ENCODE measurements at regions of chr5 and their contacts with region 1.

Region 1: GRCh38 chr5:33936004-33936380 is 194 bp upstream of the RXFP3 start:
- DNase-seq: peak; percentile 72 to 88
- ATAC-seq: peak; percentile 87
- H3K4me3 ChIP-seq: peak overlapping the region in 1 of 2 donors; percentile 14
- H3K27ac ChIP-seq: no peak overlapping the region
- H3K4me1 ChIP-seq: no peaks in the 10 kb centered on the region
- H3K27me3 ChIP-seq: no peaks in the 10 kb centered on the region

Region 2: GRCh38 chr5:33439905-33440481 is 496.0 kb before region 1 on chr5:
- intact Hi-C with region 1: loop called in 1 of 2 experiments (anchors 10 kb)
- DNase-seq: no peak
- ATAC-seq: no peak
- H3K4me3 ChIP-seq: peak overlapping the region; percentile 75 to 95
- H3K27ac ChIP-seq: peak overlapping the region; percentile 18 to 87
- H3K4me1 ChIP-seq: peaks cover 0 to 5% of the 10 kb centered on the region in 2 donors
- H3K27me3 ChIP-seq: no peaks in the 10 kb centered on the region

Region 3: DNA sequence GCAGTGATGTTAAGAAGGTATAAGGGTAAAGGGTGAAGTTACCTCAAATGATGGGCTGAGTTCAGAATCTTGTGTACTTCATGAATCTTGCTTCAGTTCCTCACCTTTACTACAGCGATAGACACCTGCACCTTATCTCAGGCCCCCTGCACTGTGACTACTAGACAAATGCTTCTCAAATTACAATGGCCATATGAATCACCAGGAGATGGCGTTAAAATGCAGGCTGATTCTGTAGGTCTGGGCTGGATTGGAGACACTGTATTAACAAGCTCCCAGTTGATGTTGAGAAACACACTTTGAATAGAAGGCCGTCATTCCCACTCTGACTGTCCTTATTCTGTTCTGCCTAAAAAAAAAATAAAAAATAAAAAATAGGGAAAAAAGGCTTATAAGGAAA is 465.4 kb before region 1 on chr5:
- intact Hi-C with region 1: loop called in 1 of 2 experiments (anchors 10 kb)
- DNase-seq: no peak
- ATAC-seq: peak; percentile 60
- H3K4me3 ChIP-seq: no peak overlapping the region
- H3K27ac ChIP-seq: no peak overlapping the region
- H3K4me1 ChIP-seq: no peaks in the 10 kb centered on the region
- H3K27me3 ChIP-seq: no peaks in the 10 kb centered on the region

Measured in aorta (tissue), 5 donors.